ENCODE measurements at regions of chr4 and their contacts with region 1.

Region 1: GRCh38 chr4:174224550-174224949 is 58.9 kb downstream of the FBXO8 start:
- DNase-seq: no peak
- H3K4me3 ChIP-seq: no peak overlapping the region
- H3K27me3 ChIP-seq: peaks cover 7% of the 10 kb centered on the region
- CTCF ChIP-seq: no peak

Region 2: DNA sequence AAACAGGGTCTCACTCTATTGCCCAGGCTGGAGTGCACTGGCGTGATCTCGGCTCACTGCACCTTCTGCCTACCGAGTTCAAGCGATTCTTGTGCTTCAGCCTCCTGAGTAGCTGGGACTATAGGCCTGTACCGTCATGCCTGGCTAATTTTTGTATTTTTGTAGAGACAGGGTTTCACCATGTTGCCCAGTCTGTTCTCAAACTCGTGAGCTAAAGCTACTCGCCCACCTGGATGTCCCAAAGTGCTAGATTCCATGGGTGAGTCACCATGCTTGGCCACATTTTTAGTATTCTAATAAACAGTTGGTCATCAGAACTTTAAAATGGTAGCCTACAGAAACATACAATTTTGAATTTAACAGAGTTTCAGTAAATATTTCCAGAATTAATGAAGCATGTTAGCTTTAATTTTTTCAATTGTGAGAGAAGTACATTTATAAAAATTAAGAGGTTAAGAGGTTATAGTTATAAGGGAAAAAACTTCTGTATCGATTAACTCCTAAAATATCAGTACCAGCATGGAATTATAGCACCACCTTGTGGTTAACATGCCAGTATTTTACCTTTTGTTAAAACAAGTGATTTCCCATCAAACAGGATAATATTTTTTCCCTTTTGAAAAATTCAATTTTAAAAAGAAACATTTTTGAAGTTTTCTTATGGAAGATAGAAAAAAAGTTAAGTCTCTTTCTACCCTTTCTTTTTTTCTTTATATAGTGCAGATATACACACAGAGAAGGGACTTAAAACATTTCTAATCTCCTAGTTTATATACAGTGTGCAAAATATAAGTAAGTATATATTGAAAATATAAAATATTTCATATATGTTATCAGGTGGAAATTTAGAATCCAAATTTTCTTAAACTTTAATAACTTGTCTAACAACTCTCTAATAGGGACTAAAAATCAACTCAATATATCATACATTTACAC is 94.5 kb after region 1 on chr4:
- CTCF ChIA-PET with region 1: interaction called, 12 read pairs
- POLR2A ChIA-PET with region 1: no interaction called
- DNase-seq: no peak
- H3K4me3 ChIP-seq: no peak overlapping the region
- H3K27me3 ChIP-seq: no peaks in the 10 kb centered on the region
- CTCF ChIP-seq: peak; percentile 60

Measured in BJ (cell line).